WTC11 (cell line): ENCODE measurements at regions of chr2 and their contacts with region 1.

Region 1: GRCh38 chr2:78676921-78677696 is 348.4 kb upstream of the REG3G start:
- DNase-seq: peak; percentile 22
- ATAC-seq: no peak
- H3K4me3 Mint-ChIP-seq: no peak overlapping the region
- H3K27ac Mint-ChIP-seq: no peak overlapping the region
- H3K4me1 Mint-ChIP-seq: peaks cover 21% of the 10 kb centered on the region
- H3K27me3 Mint-ChIP-seq: 0 out of 2 replicates have a peak, but pooled peaks cover 3% of the 10 kb centered on the region
- CTCF ChIP-seq: no peak

Region 2: DNA sequence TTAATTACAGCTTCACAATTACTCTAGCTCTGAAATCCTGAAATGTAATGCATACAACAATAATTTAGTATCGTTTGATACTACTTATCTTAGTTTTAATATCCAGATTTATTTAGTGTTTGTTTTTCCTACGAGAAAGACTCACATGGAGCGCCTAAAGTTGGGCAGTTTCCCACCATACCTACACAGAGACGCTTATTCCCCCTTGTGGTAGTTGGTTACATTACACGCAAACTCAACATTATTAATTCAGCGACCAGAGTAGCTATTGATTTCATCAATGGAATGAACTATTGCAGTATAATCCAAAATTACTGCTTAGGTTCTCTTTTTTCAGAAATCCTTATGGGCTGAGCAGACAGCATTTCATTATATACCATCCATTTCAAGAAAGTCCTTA is 184.4 kb after region 1 on chr2:
- CTCF ChIA-PET with region 1: interaction called, 15 read pairs
- POLR2A ChIA-PET with region 1: no interaction called
- DNase-seq: no peak
- ATAC-seq: peak; percentile 67
- H3K4me3 Mint-ChIP-seq: no peak overlapping the region
- H3K27ac Mint-ChIP-seq: no peak overlapping the region
- H3K4me1 Mint-ChIP-seq: peaks cover 14% of the 10 kb centered on the region
- H3K27me3 Mint-ChIP-seq: no peaks in the 10 kb centered on the region
- CTCF ChIP-seq: peak; percentile 51

Region 3: DNA sequence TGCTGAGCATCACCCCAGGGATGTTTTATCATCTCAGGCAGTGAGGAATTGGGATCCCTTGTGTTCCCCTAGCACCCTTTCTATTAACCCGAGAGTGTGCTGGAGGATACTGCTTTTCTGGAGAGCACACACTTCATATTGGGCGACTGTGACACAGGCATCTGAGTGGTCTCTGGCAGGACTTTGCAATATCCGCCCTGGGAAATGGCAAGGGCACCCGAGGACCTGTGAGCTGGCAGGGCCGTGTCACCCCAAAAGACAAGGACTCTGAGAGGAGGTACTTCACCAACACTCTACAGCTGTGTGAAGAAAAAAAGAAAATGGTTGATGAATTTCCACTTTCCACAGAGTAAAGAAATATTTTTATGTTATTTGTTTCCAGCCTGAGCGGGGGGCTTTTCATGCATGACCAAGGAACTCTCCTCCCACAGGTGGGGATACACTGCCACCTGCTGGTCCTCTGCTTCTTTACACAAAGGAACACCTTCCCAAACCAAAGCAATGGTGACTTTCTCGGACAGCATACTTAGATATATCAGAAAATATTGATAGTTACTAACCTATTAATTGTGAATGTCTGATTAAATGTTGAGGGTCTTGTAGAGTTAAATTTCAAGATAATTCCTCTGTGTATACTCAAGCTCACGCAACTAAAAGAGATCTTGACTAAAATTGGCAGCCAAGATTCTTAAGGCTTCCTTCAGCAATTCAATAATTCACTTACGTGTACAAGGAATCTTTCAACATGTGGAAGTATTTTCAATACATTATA is 302.5 kb after region 1 on chr2:
- CTCF ChIA-PET with region 1: interaction called, 22 read pairs
- POLR2A ChIA-PET with region 1: no interaction called
- DNase-seq: peak; percentile 83
- ATAC-seq: peak; percentile 84
- H3K4me3 Mint-ChIP-seq: no peak overlapping the region
- H3K27ac Mint-ChIP-seq: no peak overlapping the region
- H3K4me1 Mint-ChIP-seq: peaks cover 20% of the 10 kb centered on the region
- H3K27me3 Mint-ChIP-seq: no peaks in the 10 kb centered on the region
- CTCF ChIP-seq: peak; percentile 74